HepG2 (cell line): ENCODE measurements at regions of chr10 and their contacts with region 1.

Region 1: GRCh38 chr10:97131666-97132065 is 54.1 kb downstream of the SLIT1 start:
- DNase-seq: no peak
- ATAC-seq: no peak
- H3K4me3 ChIP-seq: no peak overlapping the region
- H3K27ac ChIP-seq: no peak overlapping the region
- H3K4me1 ChIP-seq: peaks cover 31% of the 10 kb centered on the region
- H3K27me3 ChIP-seq: peaks cover 4 to 72% of the 10 kb centered on the region in 2 experiments
- CTCF ChIP-seq: no peak
- EP300 ChIP-seq: no peak
- POLR2A ChIP-seq: no peak
- RAD21 ChIP-seq: no peak

Region 2: GRCh38 chr10:97101166-97101940 is 30.3 kb before region 1 on chr10:
- CTCF ChIA-PET with region 1: no interaction called
- POLR2A ChIA-PET with region 1: no interaction called
- in situ Hi-C with region 1: no loop called
- intact Hi-C with region 1: loop called (anchors 2 kb)
- DNase-seq: no peak
- ATAC-seq: no peak
- H3K4me3 ChIP-seq: no peak overlapping the region
- H3K27ac ChIP-seq: no peak overlapping the region
- H3K4me1 ChIP-seq: no peaks in the 10 kb centered on the region
- H3K27me3 ChIP-seq: peaks cover 8 to 90% of the 10 kb centered on the region in 2 experiments
- CTCF ChIP-seq: no peak
- EP300 ChIP-seq: no peak
- POLR2A ChIP-seq: no peak
- RAD21 ChIP-seq: no peak

Region 3: DNA sequence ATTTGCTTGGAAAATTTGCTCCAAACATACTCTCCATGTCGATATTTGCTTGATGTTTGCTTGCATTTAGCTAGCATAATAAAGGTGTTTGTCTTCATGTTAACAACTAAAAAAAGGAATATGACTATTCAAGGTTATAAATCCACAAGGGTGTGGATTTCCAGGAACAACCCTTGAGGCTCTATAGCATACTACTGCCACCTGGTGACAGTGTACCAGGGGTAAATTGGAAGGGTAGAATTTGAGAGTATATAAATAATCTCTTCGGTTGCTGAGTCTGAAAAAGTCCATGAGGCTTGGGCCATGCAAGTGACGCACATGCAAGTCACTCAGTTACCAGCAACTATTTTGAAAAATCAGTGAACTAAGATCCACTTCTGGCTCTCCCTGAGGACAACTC is 14.3 kb before region 1 on chr10:
- CTCF ChIA-PET with region 1: no interaction called
- POLR2A ChIA-PET with region 1: no interaction called
- in situ Hi-C with region 1: no loop called
- intact Hi-C with region 1: no loop called
- DNase-seq: no peak
- ATAC-seq: no peak
- H3K4me3 ChIP-seq: no peak overlapping the region
- H3K27ac ChIP-seq: no peak overlapping the region
- H3K4me1 ChIP-seq: peaks cover 7% of the 10 kb centered on the region; the same call in 1 of the 2 replicates
- H3K27me3 ChIP-seq: peaks cover 10 to 74% of the 10 kb centered on the region in 2 experiments; a peak in 4 of 5 replicates
- CTCF ChIP-seq: peak; percentile 41
- EP300 ChIP-seq: no peak
- POLR2A ChIP-seq: no peak
- RAD21 ChIP-seq: no peak